ENCODE measurements at regions of chr4 and their contacts with region 1.

Region 1: DNA sequence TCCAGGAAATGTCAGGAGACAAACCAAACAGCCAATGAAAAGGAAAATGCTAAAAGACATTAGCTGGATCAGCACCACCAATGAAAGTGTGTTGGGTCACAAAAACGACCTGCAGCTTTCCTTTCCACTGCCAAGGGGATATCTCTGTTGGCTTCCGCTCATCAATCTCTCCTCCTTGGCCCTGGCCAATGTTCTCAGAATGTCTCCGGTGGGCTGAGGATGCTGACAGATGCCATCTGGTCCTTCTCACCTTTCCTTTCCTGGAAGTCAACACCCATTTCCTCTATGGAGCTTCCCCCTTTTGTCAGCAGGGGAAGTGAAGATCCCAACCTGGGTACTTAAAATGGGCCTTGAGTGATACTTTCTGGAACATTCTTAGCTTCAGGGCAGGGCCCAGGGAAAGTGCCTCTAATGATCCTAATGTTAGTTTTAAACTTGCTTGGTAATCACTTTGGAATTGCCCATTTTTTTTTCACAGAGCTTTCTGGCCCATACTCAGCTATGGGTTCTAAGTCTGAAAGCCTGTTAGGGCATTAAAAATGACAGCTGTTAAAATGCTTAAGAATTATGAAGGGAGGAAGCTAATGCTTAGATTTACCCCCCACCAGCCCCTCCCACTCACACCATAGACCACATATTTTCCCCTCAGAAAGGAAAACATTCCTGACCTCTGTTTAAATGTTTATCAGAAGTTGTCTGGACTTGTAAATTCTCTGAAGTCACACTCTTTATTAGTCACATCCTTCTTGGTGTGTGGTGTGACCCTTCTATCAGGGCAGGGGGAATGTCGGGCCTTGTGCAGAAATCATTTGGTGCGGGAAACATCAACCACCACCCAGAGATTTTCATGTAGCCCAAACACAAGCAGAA is 29.2 kb downstream of the IGFBP7 start:
- DNase-seq: peak; percentile 92
- H3K4me3 ChIP-seq: no peak overlapping the region
- H3K27ac ChIP-seq: peak overlapping the region; percentile 86
- H3K4me1 ChIP-seq: peaks cover 64% of the 10 kb centered on the region
- H3K27me3 ChIP-seq: no peaks in the 10 kb centered on the region
- CTCF ChIP-seq: no peak

Region 2: GRCh38 chr4:57110640-57111511 is 29.9 kb after region 1 on chr4:
- CTCF ChIA-PET with region 1: no interaction called
- dilution Hi-C with region 1: no loop called
- in situ Hi-C with region 1: no loop called
- intact Hi-C with region 1: loop called (anchors 1 kb)
- DNase-seq: peak; percentile 64
- H3K4me3 ChIP-seq: peak overlapping the region in 2 of 3 experiments; percentile 74 to 83
- H3K27ac ChIP-seq: peak overlapping the region; percentile 22
- H3K4me1 ChIP-seq: peaks cover 32% of the 10 kb centered on the region
- H3K27me3 ChIP-seq: no peaks in the 10 kb centered on the region
- CTCF ChIP-seq: no peak

Region 3: DNA sequence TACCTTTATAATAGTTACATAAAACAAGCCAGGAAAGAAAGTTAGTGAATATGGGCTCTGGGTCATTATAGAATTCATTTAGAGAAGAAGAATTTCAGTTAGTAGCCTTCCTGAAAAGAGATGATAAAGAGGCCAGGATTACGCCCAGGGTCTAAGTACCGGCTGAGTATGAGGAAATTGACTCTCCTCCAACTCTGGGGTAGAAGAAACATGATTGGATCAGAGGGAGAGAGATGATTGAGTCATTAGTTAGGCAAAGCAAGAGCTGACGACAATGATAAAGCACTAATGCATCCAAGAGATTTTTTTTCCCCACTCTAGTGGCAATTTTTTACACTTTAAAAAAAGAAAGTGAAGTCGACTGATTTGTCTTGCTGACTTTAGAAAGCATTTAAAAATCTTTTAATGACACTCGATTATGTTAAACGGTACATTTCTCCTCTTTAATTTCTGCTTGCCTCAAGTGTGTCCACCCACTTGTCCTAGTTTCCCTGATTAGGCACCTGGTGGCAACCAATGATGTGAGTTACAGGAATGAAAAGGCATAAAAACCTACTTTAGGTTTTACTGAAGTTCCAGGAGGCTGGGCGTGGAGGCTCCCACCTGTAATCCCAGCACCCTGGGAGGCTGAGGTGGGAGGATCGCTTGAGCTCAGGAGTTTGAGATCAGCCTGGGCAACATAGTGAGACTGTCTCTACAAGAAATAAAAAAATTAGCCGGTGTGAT is 66.5 kb after region 1 on chr4:
- CTCF ChIA-PET with region 1: no interaction called
- dilution Hi-C with region 1: no loop called
- in situ Hi-C with region 1: no loop called
- intact Hi-C with region 1: loop called (anchors 2 kb)
- DNase-seq: no peak
- H3K4me3 ChIP-seq: no peak overlapping the region
- H3K27ac ChIP-seq: no peak overlapping the region
- H3K4me1 ChIP-seq: peaks cover 29% of the 10 kb centered on the region
- H3K27me3 ChIP-seq: no peaks in the 10 kb centered on the region
- CTCF ChIP-seq: no peak